AG04449 (cell line): ENCODE measurements at regions of chr17 and their contacts with region 1.

Region 1: DNA sequence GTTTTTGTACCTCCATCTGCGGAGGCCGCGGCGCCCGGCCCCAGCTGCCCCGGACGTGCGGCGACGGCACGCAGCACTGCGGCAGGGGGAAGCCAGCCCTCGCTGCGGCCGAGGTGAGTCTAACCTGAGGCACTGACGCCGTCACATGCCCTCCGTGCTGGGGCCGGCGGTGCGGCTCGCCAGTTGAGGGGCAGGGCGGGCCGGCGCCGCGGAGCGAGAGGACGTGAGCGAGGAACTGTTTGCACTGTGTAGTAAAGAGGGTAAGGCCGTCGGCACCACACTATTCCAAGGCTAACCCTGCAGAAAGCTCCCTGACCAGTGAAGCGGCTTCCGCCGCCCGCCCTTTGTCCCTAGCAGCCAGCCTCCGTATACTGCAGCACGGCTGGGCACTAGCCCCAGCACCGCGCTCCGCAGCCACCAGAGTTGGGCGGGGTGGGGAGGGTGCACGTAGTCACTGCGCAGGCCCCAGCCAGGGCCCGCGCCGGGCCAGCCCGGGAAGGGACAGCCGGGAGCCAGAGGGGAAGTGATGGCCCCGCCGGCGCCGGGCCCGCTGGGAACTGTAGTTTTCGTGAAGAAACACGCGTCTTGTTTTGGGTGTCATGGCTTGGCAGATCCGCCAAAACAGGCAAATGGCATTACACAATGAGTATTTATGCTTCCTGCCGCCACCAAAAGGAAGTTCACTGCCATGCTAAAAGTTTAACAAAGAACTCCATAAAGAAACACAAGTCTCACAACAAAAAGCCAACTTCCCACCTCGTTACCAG is 580 bp upstream of the KANSL1 start:
- DNase-seq: peak; percentile 63
- H3K4me3 ChIP-seq: peak overlapping the region; percentile 65
- CTCF ChIP-seq: no peak

Region 2: GRCh38 chr17:45155029-45155428 is 1038.8 kb before region 1 on chr17:
- CTCF ChIA-PET with region 1: no interaction called
- POLR2A ChIA-PET with region 1: no interaction called
- DNase-seq: no peak
- H3K4me3 ChIP-seq: no peak overlapping the region
- CTCF ChIP-seq: no peak

Region 3: DNA sequence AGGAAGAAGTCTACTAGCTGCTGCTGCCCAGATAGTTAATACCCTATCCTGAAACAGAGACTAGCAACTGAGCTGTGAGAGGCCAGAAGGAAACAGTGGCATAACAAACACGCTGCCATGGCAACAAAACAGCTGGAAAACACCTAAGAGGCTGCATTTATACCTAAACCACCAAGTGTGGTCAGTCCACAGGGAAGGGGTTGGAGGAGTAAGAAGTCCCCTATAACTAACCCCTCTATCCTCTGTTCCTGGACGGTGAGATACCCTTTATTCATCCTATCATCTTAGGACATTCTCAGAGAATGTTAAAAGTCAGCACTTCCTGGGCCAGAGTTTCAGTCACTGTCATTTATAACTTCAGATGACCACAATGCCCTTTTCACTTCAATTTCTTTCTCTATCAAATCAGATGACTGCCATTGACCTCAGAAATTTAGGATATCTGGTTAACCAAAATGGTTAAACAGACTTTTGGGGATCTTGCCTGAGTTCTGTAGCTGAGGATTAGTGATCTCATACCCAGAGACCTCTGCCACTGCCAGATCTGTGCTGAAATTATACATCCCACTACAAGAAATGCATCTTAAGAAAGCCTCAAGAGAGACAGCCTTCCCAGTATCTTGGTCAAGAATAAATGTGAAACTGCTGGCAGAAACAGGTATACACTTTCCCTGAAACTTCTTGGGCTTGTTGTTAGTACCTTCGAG is 158.5 kb before region 1 on chr17:
- CTCF ChIA-PET with region 1: interaction called, 77 read pairs
- POLR2A ChIA-PET with region 1: no interaction called
- DNase-seq: no peak
- H3K4me3 ChIP-seq: no peak overlapping the region
- CTCF ChIP-seq: no peak

Region 4: DNA sequence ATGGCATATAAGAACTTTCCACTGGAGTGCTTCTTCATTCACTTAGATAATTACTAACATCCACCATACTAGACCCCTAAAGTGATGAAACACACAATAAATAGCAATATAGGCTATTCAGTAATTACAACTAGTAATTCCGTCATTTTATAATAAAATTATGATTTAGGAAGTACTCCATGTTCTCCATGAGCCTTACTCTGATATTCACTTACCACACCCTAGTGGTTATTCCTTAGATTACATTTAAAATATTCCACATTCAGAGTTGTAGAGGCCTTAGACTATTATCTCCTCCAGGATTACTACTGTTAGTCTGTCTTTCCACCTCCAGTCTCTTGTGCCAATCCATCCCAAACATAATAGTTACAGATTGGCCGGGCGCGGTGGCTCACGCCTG is 132.4 kb before region 1 on chr17:
- CTCF ChIA-PET with region 1: interaction called, 37 read pairs
- POLR2A ChIA-PET with region 1: no interaction called
- DNase-seq: no peak
- H3K4me3 ChIP-seq: no peak overlapping the region
- CTCF ChIP-seq: no peak

Region 5: GRCh38 chr17:46078675-46079074 is 115.1 kb before region 1 on chr17:
- CTCF ChIA-PET with region 1: interaction called, 14 read pairs
- POLR2A ChIA-PET with region 1: no interaction called
- DNase-seq: no peak
- H3K4me3 ChIP-seq: no peak overlapping the region
- CTCF ChIP-seq: no peak

Region 6: DNA sequence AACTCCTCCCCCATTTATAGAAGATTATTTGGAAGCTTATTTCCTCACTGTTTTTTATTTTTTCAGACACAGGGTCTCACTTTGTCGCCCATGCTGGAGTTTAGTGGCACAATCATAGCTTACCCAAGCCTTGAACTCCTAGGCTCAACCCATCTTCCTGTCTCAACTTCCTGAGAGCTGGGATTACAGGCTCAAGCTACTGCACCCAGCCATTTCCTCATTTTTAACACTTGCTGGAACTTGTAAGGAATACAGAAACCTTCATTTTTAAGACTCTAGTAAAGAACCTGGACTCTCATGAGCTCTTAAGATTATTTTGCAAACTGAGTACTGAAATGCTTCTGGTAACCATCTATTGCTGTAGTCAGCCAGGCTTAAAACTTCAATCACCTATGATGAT is 30.5 kb before region 1 on chr17:
- CTCF ChIA-PET with region 1: interaction called, 16 read pairs
- POLR2A ChIA-PET with region 1: interaction called, 3 read pairs
- DNase-seq: no peak
- H3K4me3 ChIP-seq: no peak overlapping the region
- CTCF ChIP-seq: no peak

Region 7: GRCh38 chr17:46179375-46179999 is 14.3 kb before region 1 on chr17:
- CTCF ChIA-PET with region 1: interaction called, 88 read pairs
- POLR2A ChIA-PET with region 1: interaction called, 4 read pairs
- DNase-seq: no peak
- H3K4me3 ChIP-seq: no peak overlapping the region
- CTCF ChIP-seq: no peak

Region 8: DNA sequence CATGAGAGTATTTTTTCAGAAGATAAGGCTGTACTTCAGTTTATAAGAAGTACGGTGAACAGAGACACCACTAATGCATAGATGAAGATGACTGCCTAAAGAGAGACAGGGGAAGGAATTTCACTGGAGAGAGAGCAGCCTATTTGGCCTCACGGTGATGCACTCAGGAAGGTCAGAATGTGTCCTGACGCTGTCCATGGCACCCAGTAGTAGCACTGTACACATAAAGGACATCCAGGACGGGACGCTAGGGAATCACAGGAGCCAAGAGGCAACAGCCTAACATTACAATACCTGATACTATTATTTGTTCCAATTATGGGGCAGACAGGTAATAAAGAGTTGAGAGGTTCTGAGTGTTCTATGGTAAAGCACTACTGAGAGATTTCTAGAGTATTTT is 76.2 kb after region 1 on chr17:
- CTCF ChIA-PET with region 1: no interaction called
- POLR2A ChIA-PET with region 1: no interaction called
- DNase-seq: no peak
- H3K4me3 ChIP-seq: no peak overlapping the region
- CTCF ChIP-seq: no peak